Right ventricle myocardium superior (tissue), 1 donor: ENCODE measurements at regions of chr2 and their contacts with region 1.

Region 1: DNA sequence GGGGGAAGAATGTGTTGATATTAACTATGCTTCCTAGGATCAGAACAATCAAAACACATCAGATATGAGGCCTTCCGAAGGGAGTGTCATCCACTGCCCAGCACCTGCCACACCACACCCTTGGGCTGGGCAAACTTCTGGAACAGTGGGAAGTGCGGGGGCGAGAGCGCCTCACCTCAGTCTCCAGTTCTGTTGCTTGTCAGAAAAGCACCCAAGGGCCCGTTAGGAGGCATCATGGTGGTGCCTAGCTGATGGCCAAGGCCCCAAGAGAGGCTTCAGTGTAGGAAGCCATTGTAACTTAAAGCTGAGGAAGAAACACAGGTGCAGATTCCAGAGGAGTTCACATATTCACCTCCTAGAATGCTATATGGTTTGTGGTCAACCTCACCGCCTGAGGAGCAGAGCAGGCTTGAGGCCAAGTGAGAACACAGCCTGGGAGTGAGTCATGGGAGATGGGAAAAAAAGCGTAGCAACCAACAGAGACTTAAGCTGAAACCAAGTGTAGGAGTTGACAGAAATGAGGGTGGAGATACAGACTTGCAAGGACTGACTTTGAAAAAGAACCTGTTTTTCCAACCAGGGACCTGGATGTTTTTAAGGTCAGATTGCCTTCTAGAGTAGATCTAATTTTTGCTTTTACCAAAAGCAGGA is 85.2 kb upstream of the ATL2 start:
- DNase-seq: no peak
- ATAC-seq: no peak

Region 2: DNA sequence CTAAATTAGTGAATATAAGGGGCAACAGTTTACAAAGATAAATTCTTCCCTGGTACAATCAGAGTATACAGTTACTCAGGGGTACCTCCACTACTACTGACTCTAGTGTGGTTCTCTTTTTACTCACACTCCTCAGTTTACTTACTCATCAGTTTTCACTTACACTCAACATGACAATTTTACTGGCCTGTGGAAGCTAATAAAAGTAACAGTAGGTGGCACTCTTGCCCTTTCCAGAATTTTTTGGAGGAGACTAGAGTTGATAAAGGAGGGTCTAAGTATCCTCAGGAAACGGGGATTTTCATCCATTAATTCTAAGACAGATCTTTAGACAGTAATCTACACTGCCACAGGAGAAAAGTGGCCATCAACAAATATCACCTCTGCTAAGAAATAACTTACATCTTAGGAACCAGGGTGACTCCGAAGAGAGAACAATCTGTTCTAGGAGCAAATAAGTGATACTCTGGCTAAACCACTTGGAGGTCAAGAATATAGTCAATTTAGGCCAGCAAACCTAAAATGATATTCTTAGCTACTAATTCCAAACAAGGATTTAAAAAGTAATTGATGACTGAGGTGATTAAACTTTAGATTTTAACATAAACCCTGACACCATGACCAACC is 146.4 kb before region 1 on chr2:
- intact Hi-C with region 1: loop called (anchors 5 kb)
- DNase-seq: no peak
- ATAC-seq: peak; percentile 81